ENCODE measurements at regions of chr2 and their contacts with region 1.

Region 1: GRCh38 chr2:33033606-33034081 is 86.9 kb downstream of the LTBP1 start:
- DNase-seq: peak in 1 of 2 experiments; percentile 69
- ATAC-seq: peak; percentile 76 to 87; a peak in 5 of 6 replicates
- H3K4me3 ChIP-seq: no peak overlapping the region
- H3K27ac ChIP-seq: peak overlapping the region in 1 of 2 experiments; percentile 3; a peak in 1 of 6 replicates
- H3K4me1 ChIP-seq: peaks cover 4% of the 10 kb centered on the region; the same call in 1 of the 3 replicates
- CTCF ChIP-seq: peak; percentile 86
- EP300 ChIP-seq: no peak
- POLR2A ChIP-seq: no peak
- RAD21 ChIP-seq: peak; percentile 91

Region 2: GRCh38 chr2:32425719-32426141 is 607.9 kb before region 1 on chr2:
- CTCF ChIA-PET with region 1: no interaction called
- POLR2A ChIA-PET with region 1: no interaction called
- DNase-seq: no peak
- ATAC-seq: peak in 1 of 2 experiments; percentile 55; a peak in 3 of 6 replicates
- H3K4me3 ChIP-seq: no peak overlapping the region
- H3K27ac ChIP-seq: no peak overlapping the region
- H3K4me1 ChIP-seq: peaks cover 41% of the 10 kb centered on the region
- CTCF ChIP-seq: no peak
- EP300 ChIP-seq: no peak
- POLR2A ChIP-seq: no peak
- RAD21 ChIP-seq: no peak

Region 3: GRCh38 chr2:32656069-32656468 is 377.6 kb before region 1 on chr2:
- CTCF ChIA-PET with region 1: no interaction called
- POLR2A ChIA-PET with region 1: no interaction called
- DNase-seq: no peak
- ATAC-seq: no peak
- H3K4me3 ChIP-seq: no peak overlapping the region
- H3K27ac ChIP-seq: no peak overlapping the region
- H3K4me1 ChIP-seq: no peaks in the 10 kb centered on the region
- CTCF ChIP-seq: no peak
- EP300 ChIP-seq: no peak
- POLR2A ChIP-seq: no peak
- RAD21 ChIP-seq: no peak

Region 4: DNA sequence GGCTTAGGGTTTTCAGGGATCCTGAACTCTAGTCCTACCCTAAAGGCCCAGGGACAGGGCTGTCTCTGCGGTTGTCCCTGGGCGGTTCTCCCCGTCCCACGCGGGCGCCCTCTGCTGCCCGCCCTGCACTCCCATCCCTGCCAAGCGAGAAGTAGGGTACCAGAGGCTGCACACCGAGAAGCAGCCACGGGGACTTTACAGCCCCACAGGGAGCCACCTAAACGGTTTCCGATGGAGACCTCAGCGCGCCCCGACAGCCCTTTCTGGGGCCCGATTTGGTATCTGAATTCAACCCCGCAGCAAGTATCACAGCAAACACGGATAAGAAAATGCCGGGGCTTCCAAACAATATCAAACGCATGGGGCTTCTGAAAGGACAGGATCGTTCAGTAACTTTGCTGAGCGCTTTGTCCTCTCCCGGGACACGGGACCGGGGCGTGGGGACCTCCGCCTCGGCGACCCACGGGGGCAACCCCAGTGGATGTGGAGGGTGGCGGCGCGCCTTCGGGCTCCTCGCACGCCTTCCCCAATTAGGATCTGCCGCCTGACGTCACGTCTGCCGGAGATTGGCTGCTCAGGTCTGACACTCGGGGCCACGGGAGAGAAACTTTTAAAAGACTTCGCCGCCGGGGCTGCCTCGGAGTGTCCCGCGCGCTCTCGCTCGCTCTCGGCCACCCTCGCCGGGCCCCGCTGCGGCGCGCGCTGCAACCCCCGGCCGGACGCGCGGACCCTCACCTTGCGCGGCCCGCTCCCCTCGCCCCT is 87.1 kb before region 1 on chr2 and contains the start of gene LTBP1:
- CTCF ChIA-PET with region 1: interaction called, 25 read pairs
- POLR2A ChIA-PET with region 1: interaction called, 4 read pairs
- DNase-seq: peak; percentile 83 to 91
- ATAC-seq: peak; percentile 82 to 95
- H3K4me3 ChIP-seq: peak within 1 kb of the TSS; percentile 96
- H3K27ac ChIP-seq: peak within 1 kb of the TSS; percentile 94 to 96
- H3K4me1 ChIP-seq: peaks cover 19% of the 10 kb centered on the region
- CTCF ChIP-seq: peak; percentile 95
- EP300 ChIP-seq: no peak
- POLR2A ChIP-seq: peak; percentile 56
- RAD21 ChIP-seq: peak; percentile 81 to 88
- polyA plus RNA-seq, gene LTBP1: 30.4 and 42.5 TPM in 2 replicates

Region 5: DNA sequence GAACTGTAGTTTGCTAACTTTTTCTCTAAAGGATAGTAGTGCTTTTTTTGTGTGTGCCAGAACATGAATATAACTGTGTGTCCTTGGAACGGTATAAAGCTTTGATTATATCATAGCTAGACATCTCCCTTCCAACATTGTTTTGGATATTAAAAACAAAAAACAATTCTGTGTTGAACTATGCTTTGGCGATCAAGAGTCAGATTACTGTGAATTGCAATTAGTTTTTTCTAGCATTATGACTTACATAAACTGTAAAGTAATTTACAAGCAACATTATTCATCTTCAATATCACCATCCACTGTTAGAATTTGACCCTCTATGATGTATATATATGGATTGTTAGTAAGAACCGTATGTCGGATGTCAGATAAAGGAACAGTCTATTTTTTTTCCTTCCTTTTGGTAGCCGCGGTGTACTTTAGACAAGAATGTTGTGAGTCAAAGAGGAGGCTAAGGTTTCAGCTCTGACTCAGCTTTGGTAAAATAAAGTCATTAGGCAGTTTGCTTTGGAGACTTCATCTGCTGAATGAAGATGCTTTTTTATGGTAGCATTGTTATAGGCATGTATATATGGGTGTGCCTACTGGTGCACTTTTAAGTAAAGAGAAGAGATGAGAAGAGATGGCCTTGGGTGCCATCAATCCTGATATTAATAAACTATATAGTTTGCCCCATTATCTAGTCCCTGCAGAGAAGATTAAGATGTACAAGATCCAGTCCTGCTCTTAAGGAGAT is 10.5 kb before region 1 on chr2:
- CTCF ChIA-PET with region 1: interaction called, 38 read pairs
- POLR2A ChIA-PET with region 1: no interaction called
- DNase-seq: peak; percentile 51 to 82
- ATAC-seq: peak; percentile 83 to 93
- H3K4me3 ChIP-seq: no peak overlapping the region; the same call in 2 of the 3 replicates
- H3K27ac ChIP-seq: peak overlapping the region; percentile 58 to 69
- H3K4me1 ChIP-seq: peaks cover 50% of the 10 kb centered on the region
- CTCF ChIP-seq: no peak
- EP300 ChIP-seq: no peak
- POLR2A ChIP-seq: no peak
- RAD21 ChIP-seq: no peak

Region 6: GRCh38 chr2:33059471-33060156 is 26.0 kb after region 1 on chr2:
- CTCF ChIA-PET with region 1: interaction called, 10 read pairs
- POLR2A ChIA-PET with region 1: no interaction called
- DNase-seq: no peak
- ATAC-seq: no peak; a peak in 1 of 6 replicates
- H3K4me3 ChIP-seq: no peak overlapping the region
- H3K27ac ChIP-seq: no peak overlapping the region
- H3K4me1 ChIP-seq: peaks cover 8% of the 10 kb centered on the region; the same call in 1 of the 3 replicates
- CTCF ChIP-seq: no peak
- EP300 ChIP-seq: no peak
- POLR2A ChIP-seq: no peak
- RAD21 ChIP-seq: no peak

Region 7: DNA sequence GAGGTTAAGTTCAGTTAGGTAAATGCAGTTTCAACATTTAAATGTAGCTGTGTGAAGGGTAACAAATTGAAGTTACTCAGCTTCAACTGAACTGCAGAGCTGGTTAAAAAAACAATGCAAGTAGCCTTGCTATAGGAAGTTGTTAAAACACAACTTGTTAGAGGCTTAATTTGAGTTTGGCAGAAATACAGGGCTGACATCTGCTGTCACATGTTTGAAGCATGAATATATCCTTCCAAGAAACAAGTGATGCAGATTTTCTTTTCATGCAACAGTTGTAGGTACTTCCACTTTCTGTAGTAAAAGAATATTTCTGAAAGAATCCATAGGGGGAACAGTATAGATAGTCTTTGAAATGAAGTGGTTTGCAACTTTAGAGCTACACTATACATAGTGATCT is 234.1 kb after region 1 on chr2:
- CTCF ChIA-PET with region 1: interaction called, 66 read pairs
- POLR2A ChIA-PET with region 1: no interaction called
- DNase-seq: no peak
- ATAC-seq: no peak
- H3K4me3 ChIP-seq: no peak overlapping the region
- H3K27ac ChIP-seq: peak overlapping the region in 1 of 2 experiments; percentile 25; a peak in 1 of 6 replicates
- H3K4me1 ChIP-seq: peaks cover 22% of the 10 kb centered on the region
- CTCF ChIP-seq: no peak
- EP300 ChIP-seq: no peak
- POLR2A ChIP-seq: no peak
- RAD21 ChIP-seq: peak in 1 of 2 experiments; percentile 5; a peak in 1 of 5 replicates

Region 8: GRCh38 chr2:33380001-33380609 is 346.5 kb after region 1 on chr2:
- CTCF ChIA-PET with region 1: interaction called, 23 read pairs
- POLR2A ChIA-PET with region 1: no interaction called
- DNase-seq: peak in 1 of 2 experiments; percentile 36
- ATAC-seq: no peak
- H3K4me3 ChIP-seq: no peak overlapping the region
- H3K27ac ChIP-seq: no peak overlapping the region
- H3K4me1 ChIP-seq: peaks cover 6% of the 10 kb centered on the region; the same call in 1 of the 3 replicates
- CTCF ChIP-seq: peak; percentile 82
- EP300 ChIP-seq: no peak
- POLR2A ChIP-seq: no peak
- RAD21 ChIP-seq: peak; percentile 68 to 77; a peak in 4 of 5 replicates